Breast epithelium (tissue), 4 donors: ENCODE measurements at regions of chr17 and their contacts with region 1.

Region 1: DNA sequence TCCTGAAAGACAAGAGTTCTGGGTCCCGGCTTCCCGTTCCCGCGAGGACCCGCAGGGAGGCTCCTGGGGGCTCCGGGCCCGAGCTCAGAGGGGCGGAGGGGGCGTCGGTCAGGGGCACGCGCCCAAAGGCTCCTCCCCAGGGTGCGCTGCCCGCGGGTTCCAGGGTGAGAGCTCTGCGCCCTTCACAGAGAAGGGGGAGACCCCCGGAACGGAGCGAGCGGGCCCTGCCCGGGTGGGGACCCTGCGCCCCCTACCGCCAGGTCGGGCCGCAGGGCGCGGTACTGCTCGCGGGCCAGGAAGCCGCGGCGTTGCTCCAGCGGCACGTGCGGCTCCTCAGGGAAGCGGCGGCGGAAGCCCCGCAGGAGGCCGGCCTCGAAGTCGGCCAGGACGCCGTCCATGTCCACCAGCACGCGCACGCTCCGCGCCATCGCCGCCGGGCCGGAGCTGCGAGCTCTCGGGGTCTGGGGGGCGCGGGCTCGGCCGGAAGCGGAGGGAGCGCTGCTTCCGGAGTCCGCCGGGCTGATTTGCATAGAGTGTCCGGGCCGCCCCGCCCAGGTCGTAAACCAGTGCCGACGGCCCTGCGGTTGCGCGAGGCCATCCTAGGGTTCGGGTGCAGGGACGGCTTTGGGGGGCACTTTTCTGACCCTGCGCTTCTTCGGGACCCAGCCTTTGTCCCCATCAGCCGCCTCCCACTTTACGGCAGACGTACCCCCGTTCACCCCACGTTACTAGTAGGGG is at the start of gene NT5C:
- DNase-seq: peak; percentile 55 to 76
- H3K4me3 ChIP-seq: peak within 1 kb of the TSS; percentile 72 to 88 (median 81)
- H3K27ac ChIP-seq: peak within 1 kb of the TSS; percentile 84 to 85
- H3K4me1 ChIP-seq: no peaks in the 10 kb centered on the region
- H3K27me3 ChIP-seq: no peaks in the 10 kb centered on the region
- CTCF ChIP-seq: peak in 2 of 3 donors; percentile 7 to 48
- POLR2A ChIP-seq: no peak
- total RNA-seq, gene NT5C: 79.6 to 106 (median 91.4) TPM

Region 2: DNA sequence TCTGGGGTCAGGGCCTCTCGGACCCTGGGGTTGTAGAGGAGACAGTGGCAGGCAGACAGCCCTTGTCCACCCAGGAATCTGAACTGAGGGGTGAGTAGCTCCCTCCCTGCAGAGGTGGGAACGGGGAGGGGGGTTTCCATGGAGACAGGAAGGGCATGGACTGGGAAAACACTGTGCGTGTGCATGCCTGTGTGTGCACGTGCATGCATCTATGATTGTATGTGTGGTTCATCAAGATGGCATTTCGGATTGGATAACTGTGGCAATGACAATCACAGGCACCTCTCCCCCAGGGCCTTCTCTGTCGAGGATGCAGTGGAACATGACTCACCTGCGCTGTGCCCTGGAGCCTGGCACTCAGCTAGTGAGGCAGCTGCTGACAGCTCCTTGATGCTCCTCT is 579.4 kb before region 1 on chr17:
- intact Hi-C with region 1: no loop called
- DNase-seq: no peak
- H3K4me3 ChIP-seq: no peak overlapping the region
- H3K27ac ChIP-seq: no peak overlapping the region
- H3K4me1 ChIP-seq: no peaks in the 10 kb centered on the region
- H3K27me3 ChIP-seq: no peaks in the 10 kb centered on the region
- CTCF ChIP-seq: no peak
- POLR2A ChIP-seq: no peak

Region 3: GRCh38 chr17:75144816-75145512 is 13.5 kb after region 1 on chr17:
- intact Hi-C with region 1: loop called (anchors 1 kb)
- DNase-seq: no peak
- H3K4me3 ChIP-seq: no peak overlapping the region
- H3K27ac ChIP-seq: no peak overlapping the region
- H3K4me1 ChIP-seq: no peaks in the 10 kb centered on the region
- H3K27me3 ChIP-seq: no peaks in the 10 kb centered on the region
- CTCF ChIP-seq: no peak
- POLR2A ChIP-seq: no peak